ENCODE measurements at regions of chr6 and their contacts with region 1.

Region 1: DNA sequence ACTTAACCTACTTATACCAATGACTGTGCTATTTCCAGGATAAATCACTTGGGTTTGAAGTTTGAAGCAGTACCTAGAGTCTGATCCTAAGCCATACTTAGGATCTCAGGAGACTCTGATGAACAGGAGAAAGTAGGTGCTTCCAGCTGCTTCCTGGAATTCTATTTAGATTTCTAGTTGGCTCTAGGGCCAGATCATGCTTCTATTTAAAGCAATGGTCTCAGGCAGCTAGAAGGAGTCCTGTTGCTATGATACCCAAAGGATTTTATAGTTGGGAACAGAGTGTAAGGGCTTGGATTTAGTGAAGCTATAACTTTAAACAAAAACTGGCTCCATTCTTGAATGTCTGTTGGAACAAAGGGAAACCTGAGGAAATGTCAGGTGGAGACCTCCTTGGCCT is 52.4 kb upstream of the TINAG start:
- DNase-seq: no peak
- H3K4me3 ChIP-seq: no peak overlapping the region
- CTCF ChIP-seq: no peak

Region 2: DNA sequence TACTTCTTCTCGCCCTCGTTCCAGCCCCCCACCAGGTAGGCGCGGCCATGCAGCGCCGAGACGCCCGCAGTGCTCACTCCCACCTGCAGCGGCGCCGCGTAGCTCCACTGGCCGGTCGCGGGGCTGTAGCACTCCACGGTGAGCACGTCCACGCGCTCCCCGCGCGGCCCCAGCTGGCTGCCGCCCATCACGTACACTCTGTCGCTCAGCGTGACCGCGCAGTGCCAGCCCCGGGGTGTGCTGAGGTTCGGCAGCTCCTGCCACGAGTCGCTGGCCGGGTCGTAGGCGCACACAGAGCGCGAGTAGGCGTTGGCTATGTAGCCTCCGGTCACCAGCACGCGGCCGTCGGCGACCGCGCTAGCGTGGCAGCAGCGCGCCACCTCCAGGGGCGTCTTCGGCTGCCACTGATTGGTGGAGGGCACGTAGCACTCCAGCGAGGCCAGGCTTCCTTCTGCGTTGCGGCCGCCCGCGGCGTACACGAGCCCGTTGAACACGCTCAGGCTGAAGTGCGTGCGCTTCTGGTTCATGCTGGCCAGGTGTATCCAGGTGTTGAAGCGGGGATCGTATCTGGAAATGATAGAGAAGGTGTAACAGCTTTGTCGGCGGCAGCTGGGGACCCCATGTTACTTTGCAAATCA is 604.0 kb before region 1 on chr6:
- CTCF ChIA-PET with region 1: no interaction called
- POLR2A ChIA-PET with region 1: no interaction called
- DNase-seq: no peak
- H3K4me3 ChIP-seq: peak overlapping the region; percentile 71
- CTCF ChIP-seq: peak; percentile 37

Region 3: GRCh38 chr6:54267798-54268197 is 11.9 kb after region 1 on chr6:
- CTCF ChIA-PET with region 1: interaction called, 14 read pairs
- POLR2A ChIA-PET with region 1: no interaction called
- DNase-seq: no peak
- H3K4me3 ChIP-seq: no peak overlapping the region
- CTCF ChIP-seq: peak; percentile 52